Caco-2 (cell line): ENCODE measurements at regions of chr12 and their contacts with region 1.

Region 1: GRCh38 chr12:116502952-116503542 is 56.1 kb upstream of the MAP1LC3B2 start:
- DNase-seq: peak; percentile 92 to 96
- H3K4me3 ChIP-seq: no peak overlapping the region
- H3K4me3 Mint-ChIP-seq: peak overlapping the region; percentile 49
- H3K27ac Mint-ChIP-seq: peak overlapping the region; percentile 91
- H3K4me1 ChIP-seq: peaks cover 35% of the 10 kb centered on the region
- H3K4me1 Mint-ChIP-seq: peaks cover 31% of the 10 kb centered on the region
- H3K27me3 ChIP-seq: no peaks in the 10 kb centered on the region
- H3K27me3 Mint-ChIP-seq: no peaks in the 10 kb centered on the region
- CTCF ChIP-seq: no peak

Region 2: GRCh38 chr12:116434155-116435011 is 68.7 kb before region 1 on chr12:
- CTCF ChIA-PET with region 1: no interaction called
- POLR2A ChIA-PET with region 1: interaction called, 3 read pairs
- intact Hi-C with region 1: loop called (anchors 2 kb)
- DNase-seq: peak; percentile 90 to 94
- H3K4me3 ChIP-seq: no peak overlapping the region
- H3K4me3 Mint-ChIP-seq: peak overlapping the region; percentile 50
- H3K27ac Mint-ChIP-seq: peak overlapping the region; percentile 81
- H3K4me1 ChIP-seq: peaks cover 47% of the 10 kb centered on the region
- H3K4me1 Mint-ChIP-seq: peaks cover 41% of the 10 kb centered on the region
- H3K27me3 ChIP-seq: no peaks in the 10 kb centered on the region
- H3K27me3 Mint-ChIP-seq: no peaks in the 10 kb centered on the region
- CTCF ChIP-seq: no peak

Region 3: DNA sequence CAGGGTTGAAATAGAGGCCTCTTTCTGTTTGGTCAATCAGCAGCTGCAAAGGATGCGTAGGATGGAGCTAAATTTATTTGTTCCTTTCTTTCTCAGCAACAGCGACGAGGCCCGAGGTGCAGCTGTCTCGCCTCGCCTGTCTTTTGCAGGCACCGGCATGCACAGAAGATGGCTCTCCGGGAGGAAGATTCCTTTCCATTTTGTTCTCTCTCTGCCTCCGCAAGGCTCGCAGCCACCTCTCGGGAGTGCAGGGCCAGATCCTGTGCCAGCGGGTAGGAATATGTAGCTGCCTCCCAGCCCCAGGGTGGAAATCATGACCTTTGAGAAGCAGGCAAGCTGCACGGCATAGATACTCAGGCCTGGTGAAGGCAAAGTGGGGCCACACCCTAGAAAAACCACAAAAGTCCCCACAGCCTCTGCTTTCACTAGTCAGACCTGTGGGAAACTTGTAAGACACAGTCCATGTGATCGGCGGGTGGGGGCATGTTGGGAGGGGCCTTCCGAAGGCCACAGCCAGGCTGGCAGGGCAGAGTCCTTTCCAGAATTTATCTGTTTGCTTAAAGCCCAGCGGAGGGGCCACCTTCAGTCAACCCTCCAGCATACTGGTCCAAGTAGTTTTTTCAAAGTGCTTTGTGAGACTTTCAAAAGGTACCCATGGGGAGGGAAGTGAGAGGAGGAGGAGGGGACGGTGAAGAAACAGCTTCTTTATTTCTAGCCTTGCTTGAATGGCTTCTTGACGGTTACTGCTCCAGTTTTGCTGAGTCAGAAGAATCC is 56.3 kb after region 1 on chr12 and contains the start of gene MAP1LC3B2:
- CTCF ChIA-PET with region 1: interaction called, 8 read pairs
- POLR2A ChIA-PET with region 1: no interaction called
- intact Hi-C with region 1: loop called (anchors 1 kb)
- DNase-seq: peak; percentile 81 to 94
- H3K4me3 ChIP-seq: no peak within 1 kb of the TSS
- H3K4me3 Mint-ChIP-seq: peak within 1 kb of the TSS; percentile 56
- H3K27ac Mint-ChIP-seq: peak within 1 kb of the TSS; percentile 92
- H3K4me1 ChIP-seq: peaks cover 21% of the 10 kb centered on the region
- H3K4me1 Mint-ChIP-seq: peaks cover 20% of the 10 kb centered on the region
- H3K27me3 ChIP-seq: no peaks in the 10 kb centered on the region
- H3K27me3 Mint-ChIP-seq: no peaks in the 10 kb centered on the region
- CTCF ChIP-seq: no peak
- total RNA-seq, gene MAP1LC3B2: 1.8 TPM in 1 of 2 replicates, not detected in the other

Region 4: DNA sequence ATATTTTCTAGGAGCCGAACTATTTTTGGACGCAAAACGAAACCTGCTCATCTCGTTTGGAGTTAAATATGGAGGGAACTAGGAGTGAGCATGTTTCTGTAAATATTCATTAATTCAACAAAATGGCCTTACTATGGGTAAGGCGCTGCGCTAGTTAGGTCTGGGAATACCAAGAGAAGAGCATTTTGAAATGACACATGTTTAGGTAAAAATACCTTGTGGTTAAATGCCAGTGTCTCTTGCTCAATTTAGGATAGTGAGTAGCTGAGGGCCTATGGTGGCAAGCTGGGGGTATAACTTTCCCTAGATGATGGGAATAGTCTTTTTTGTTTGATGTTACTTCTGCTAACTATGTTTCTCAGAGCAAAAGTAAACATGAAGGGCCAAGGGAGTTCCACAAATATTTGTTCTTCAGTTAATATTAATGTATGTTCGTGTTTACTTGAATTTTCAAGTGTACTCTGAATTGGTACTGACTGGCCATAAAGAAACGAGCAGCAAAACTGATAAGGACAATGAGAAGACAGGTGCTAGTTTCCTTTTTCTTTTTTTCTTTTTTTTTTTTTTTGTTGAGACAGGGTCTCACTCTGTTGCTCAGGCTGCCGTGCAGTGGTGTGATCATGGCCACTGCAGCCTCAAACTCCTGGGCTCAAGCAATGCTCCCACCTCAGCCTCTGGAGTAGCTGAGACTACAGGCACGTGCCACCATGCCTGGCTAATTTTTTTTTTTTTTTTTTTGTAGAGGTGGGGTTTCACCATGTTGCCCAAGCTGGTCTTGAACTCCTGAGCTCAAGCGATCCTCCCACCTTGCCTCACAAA is 133.9 kb after region 1 on chr12:
- CTCF ChIA-PET with region 1: interaction called, 3 read pairs
- POLR2A ChIA-PET with region 1: no interaction called
- intact Hi-C with region 1: loop called (anchors 1 kb)
- DNase-seq: peak; percentile 64 to 65
- H3K4me3 ChIP-seq: no peak overlapping the region
- H3K4me3 Mint-ChIP-seq: peak overlapping the region; percentile 63
- H3K27ac Mint-ChIP-seq: peak overlapping the region; percentile 87
- H3K4me1 ChIP-seq: peaks cover 63% of the 10 kb centered on the region
- H3K4me1 Mint-ChIP-seq: peaks cover 40% of the 10 kb centered on the region
- H3K27me3 ChIP-seq: no peaks in the 10 kb centered on the region
- H3K27me3 Mint-ChIP-seq: no peaks in the 10 kb centered on the region
- CTCF ChIP-seq: no peak